ENCODE measurements at regions of chr12 and their contacts with region 1.

Region 1: GRCh38 chr12:133106253-133106652 is 23.8 kb downstream of the ZNF891 start:
- DNase-seq: no peak
- ATAC-seq: no peak
- H3K4me3 ChIP-seq: no peak overlapping the region
- H3K4me3 Mint-ChIP-seq: no peak overlapping the region
- H3K27ac ChIP-seq: no peak overlapping the region
- H3K27ac Mint-ChIP-seq: no peak overlapping the region
- H3K4me1 ChIP-seq: no peaks in the 10 kb centered on the region
- H3K4me1 Mint-ChIP-seq: no peaks in the 10 kb centered on the region
- H3K27me3 ChIP-seq: no peaks in the 10 kb centered on the region
- H3K27me3 Mint-ChIP-seq: no peaks in the 10 kb centered on the region
- CTCF ChIP-seq: no peak

Region 2: DNA sequence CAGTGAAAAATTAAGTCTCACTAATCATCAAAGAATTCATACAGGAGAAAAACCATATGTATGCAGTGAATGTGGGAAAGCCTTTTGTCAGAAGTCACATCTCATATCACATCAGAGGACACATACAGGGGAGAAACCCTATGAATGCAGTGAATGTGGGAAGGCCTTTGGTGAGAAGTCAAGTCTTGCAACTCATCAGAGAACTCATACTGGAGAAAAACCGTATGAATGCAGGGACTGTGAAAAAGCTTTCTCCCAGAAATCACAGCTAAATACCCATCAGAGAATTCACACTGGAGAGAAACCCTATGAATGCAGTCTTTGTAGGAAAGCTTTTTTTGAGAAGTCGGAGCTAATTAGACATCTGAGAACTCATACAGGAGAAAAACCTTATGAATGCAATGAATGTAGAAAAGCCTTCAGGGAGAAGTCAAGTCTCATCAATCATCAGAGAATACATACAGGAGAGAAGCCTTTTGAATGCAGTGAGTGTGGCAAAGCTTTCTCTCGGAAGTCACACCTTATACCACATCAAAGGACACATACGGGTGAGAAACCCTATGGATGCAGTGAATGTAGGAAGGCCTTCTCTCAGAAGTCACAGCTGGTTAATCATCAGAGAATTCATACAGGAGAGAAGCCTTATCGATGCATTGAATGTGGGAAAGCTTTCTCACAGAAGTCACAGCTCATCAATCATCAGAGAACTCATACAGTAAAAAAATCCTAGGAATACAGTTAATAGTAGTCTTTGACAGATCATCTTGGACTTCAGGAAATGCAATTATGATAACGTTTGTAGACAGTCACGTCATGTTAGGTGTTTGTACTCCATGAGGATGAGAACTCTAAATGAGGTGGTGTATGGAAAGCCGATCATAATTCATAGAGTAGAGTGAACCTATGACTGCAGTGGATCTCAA is 47.8 kb before region 1 on chr12:
- CTCF ChIA-PET with region 1: no interaction called
- POLR2A ChIA-PET with region 1: no interaction called
- intact Hi-C with region 1: loop called in 1 of 2 experiments (anchors 5 kb)
- DNase-seq: peak in 1 of 9 experiments; percentile 8
- ATAC-seq: no peak
- H3K4me3 ChIP-seq: peak overlapping the region in 1 of 2 experiments; percentile 21
- H3K4me3 Mint-ChIP-seq: no peak overlapping the region
- H3K27ac ChIP-seq: no peak overlapping the region
- H3K27ac Mint-ChIP-seq: no peak overlapping the region
- H3K4me1 ChIP-seq: no peaks in the 10 kb centered on the region
- H3K4me1 Mint-ChIP-seq: no peaks in the 10 kb centered on the region
- H3K27me3 ChIP-seq: no peaks in the 10 kb centered on the region
- H3K27me3 Mint-ChIP-seq: no peaks in the 10 kb centered on the region
- CTCF ChIP-seq: no peak